Mammary epithelial cell (primary cell): ENCODE measurements at regions of chr15 and their contacts with region 1.

Region 1: DNA sequence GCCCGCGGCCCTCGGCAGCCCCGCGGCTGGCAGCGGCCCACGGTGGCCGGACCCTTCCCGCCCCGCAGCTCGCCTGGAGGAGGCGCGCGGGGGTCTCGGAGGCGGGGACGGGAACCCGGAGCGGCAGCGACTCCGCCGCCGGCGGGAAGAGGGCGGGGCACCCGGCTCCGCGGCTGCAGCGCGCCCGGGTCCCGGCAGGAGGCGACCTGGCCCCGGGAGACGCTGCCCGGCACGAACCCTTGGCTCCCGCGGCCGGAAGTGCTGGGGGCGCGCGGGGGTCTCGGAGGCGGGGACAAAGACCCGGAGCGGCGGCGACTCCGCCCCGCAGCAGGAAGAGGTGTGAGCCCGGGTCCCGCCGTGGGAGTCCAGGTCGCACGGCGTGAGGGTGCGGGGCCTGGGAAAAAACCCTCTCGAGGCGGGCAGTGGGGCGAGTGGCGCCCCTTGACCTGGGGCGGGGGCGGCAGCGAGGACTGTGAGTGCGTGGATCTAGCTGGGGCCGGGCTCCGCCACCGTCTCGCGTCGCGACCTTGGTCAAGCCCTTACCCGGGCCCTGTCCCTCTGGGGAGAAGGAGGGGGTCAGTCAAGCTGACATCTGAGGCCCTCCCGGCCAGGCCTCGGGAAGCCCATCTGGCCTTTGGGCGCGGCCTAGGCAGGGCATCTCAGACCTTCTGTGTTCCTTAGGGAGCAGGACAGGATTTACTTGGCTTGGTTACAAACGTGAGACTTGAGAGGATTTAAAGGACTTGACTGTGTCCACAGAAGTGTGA is at the start of gene CIB2:
- DNase-seq: no peak
- H3K4me3 ChIP-seq: peak within 1 kb of the TSS; percentile 39 to 63 (median 56)
- H3K27ac ChIP-seq: peak within 1 kb of the TSS; percentile 24
- H3K4me1 ChIP-seq: peaks cover 21% of the 10 kb centered on the region
- H3K27me3 ChIP-seq: no peaks in the 10 kb centered on the region
- CTCF ChIP-seq: peak; percentile 51 to 58
- total RNA-seq, gene CIB2: 5.4 to 6.5 TPM

Region 2: DNA sequence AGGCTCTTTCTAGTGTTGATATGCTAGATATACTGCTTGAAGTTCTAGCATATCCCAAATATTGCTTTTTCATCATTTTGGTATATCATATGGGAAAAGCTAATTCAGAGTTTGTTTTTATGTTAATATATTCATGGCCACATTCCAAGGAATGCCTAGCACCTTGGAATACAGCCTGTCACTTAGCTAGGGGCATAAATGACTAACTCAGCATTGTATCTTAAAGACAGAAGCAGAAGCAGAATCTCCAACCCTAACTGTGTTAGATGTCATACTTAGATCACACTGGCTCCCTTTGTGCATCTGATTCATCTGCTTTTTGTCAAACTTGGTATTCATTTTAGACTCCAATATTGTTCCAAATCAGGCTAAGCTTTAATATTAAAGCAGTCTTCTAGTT is 929.8 kb before region 1 on chr15:
- CTCF ChIA-PET with region 1: no interaction called
- dilution Hi-C with region 1: no loop called
- in situ Hi-C with region 1: no loop called
- intact Hi-C with region 1: no loop called
- DNase-seq: no peak
- H3K4me3 ChIP-seq: no peak overlapping the region
- H3K27ac ChIP-seq: no peak overlapping the region
- H3K4me1 ChIP-seq: no peaks in the 10 kb centered on the region
- H3K27me3 ChIP-seq: no peaks in the 10 kb centered on the region
- CTCF ChIP-seq: no peak

Region 3: DNA sequence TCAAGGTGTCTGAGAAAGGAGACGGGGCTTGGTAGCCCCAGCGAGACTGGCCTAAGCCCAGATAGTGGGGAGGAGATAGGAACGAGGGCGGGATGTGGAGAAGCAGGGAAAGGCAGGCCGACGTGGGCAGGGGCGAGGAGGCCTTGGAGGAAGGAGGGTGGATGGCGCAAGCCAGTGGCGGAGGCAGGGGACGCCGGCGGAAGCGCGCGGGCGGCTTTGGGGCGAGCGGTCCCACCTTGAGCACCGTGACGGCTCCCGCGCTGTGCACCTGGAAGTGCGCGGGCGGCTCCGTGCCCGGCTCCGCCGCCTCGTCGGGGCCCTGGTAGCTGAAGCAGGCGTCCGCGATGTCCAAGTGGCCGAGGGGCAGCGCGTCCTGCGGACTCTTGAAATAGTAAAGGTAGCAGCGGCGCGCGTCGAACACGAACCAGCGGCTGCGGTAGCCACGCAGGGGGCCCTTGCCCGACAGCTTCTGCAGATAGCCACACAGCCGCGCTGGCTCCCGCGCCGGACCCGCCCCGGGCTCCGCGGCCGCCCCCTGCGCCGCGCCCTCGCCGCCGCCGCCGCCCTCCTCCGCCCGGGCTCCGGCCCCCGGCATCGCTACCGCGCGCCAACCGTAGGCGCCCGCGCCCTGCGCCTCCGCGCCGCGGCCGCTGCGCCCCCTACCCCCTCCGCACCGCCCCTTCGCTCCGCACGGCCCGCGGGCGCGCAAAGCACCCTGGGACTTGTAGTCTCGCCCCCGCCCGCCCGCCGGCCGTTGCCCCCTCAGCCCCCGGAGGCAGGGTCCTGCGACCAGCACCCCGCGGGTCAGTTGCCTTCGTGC is 54.2 kb before region 1 on chr15 and contains the start of gene TBC1D2B:
- CTCF ChIA-PET with region 1: no interaction called
- dilution Hi-C with region 1: no loop called
- in situ Hi-C with region 1: no loop called
- intact Hi-C with region 1: no loop called
- DNase-seq: peak; percentile 55
- H3K4me3 ChIP-seq: peak within 1 kb of the TSS; percentile 62 to 82 (median 78)
- H3K27ac ChIP-seq: no peak within 1 kb of the TSS
- H3K4me1 ChIP-seq: peaks cover 11% of the 10 kb centered on the region
- H3K27me3 ChIP-seq: no peaks in the 10 kb centered on the region
- CTCF ChIP-seq: no peak
- total RNA-seq, gene TBC1D2B: 15.7 to 24.0 TPM

Region 4: GRCh38 chr15:78149068-78149804 is 17.8 kb after region 1 on chr15 and contains the start of gene IDH3A:
- CTCF ChIA-PET with region 1: interaction called, 7 read pairs
- dilution Hi-C with region 1: no loop called
- in situ Hi-C with region 1: no loop called
- intact Hi-C with region 1: loop called (anchors 1 kb)
- DNase-seq: peak; percentile 95
- H3K4me3 ChIP-seq: peak within 1 kb of the TSS; percentile 74 to 76 (median 76)
- H3K27ac ChIP-seq: peak within 1 kb of the TSS; percentile 52
- H3K4me1 ChIP-seq: peaks cover 22% of the 10 kb centered on the region
- H3K27me3 ChIP-seq: no peaks in the 10 kb centered on the region
- CTCF ChIP-seq: no peak
- total RNA-seq, gene IDH3A: 47.8 to 101 TPM

Region 5: DNA sequence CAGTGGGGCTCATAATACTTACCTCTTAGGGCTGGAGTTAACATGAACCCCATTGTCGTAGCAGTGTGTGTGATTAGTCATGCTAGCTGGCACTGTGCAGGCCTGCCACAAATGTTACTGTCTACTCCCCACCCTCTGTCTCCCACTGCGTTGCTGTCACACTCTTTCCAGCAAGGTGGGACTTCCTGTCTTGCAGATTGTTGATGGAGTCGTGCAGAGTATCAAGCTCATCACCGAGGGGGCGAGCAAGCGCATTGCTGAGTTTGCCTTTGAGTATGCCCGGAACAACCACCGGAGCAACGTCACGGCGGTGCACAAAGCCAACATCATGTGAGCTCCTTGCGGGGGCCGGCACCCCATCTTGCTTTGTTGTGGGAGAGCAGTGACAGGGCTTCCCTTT is 30.6 kb after region 1 on chr15:
- CTCF ChIA-PET with region 1: no interaction called
- dilution Hi-C with region 1: loop called (anchors 5 kb)
- in situ Hi-C with region 1: no loop called
- intact Hi-C with region 1: no loop called
- DNase-seq: no peak
- H3K4me3 ChIP-seq: no peak overlapping the region
- H3K27ac ChIP-seq: no peak overlapping the region
- H3K4me1 ChIP-seq: peaks cover 1% of the 10 kb centered on the region
- H3K27me3 ChIP-seq: no peaks in the 10 kb centered on the region
- CTCF ChIP-seq: no peak

Region 6: DNA sequence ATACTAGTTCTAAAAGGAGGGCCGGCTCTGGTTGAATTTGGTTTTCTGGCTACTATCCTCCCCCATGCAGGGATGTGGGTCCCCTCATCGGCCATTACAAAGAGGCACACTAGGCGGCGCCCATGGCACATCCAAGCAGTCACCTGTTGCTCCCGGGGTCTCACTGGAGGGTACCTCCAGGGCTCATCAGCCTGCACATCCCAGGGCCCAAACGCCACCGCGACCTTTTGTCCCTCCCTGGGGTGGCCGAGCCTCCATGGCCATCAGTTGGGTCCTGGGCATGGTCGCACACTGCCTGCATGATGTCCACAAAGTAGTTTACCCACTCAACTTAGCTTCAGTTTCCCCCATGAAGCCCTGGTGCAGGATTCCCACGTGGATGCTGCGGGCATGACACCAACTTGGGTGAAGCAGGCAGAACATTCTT is 46.0 kb after region 1 on chr15:
- CTCF ChIA-PET with region 1: no interaction called
- dilution Hi-C with region 1: no loop called
- in situ Hi-C with region 1: no loop called
- intact Hi-C with region 1: loop called (anchors 5 kb)
- DNase-seq: no peak
- H3K4me3 ChIP-seq: no peak overlapping the region
- H3K27ac ChIP-seq: no peak overlapping the region
- H3K4me1 ChIP-seq: peaks cover under 1% of the 10 kb centered on the region
- H3K27me3 ChIP-seq: no peaks in the 10 kb centered on the region
- CTCF ChIP-seq: peak; percentile 45 to 72

Region 7: GRCh38 chr15:78195735-78196201 is 64.3 kb after region 1 on chr15:
- CTCF ChIA-PET with region 1: interaction called, 14 read pairs
- dilution Hi-C with region 1: loop called (anchors 5 kb)
- in situ Hi-C with region 1: no loop called
- intact Hi-C with region 1: loop called (anchors 1 kb)
- DNase-seq: peak; percentile 31
- H3K4me3 ChIP-seq: no peak overlapping the region
- H3K27ac ChIP-seq: no peak overlapping the region
- H3K4me1 ChIP-seq: no peaks in the 10 kb centered on the region
- H3K27me3 ChIP-seq: no peaks in the 10 kb centered on the region
- CTCF ChIP-seq: peak; percentile 72 to 85

Region 8: DNA sequence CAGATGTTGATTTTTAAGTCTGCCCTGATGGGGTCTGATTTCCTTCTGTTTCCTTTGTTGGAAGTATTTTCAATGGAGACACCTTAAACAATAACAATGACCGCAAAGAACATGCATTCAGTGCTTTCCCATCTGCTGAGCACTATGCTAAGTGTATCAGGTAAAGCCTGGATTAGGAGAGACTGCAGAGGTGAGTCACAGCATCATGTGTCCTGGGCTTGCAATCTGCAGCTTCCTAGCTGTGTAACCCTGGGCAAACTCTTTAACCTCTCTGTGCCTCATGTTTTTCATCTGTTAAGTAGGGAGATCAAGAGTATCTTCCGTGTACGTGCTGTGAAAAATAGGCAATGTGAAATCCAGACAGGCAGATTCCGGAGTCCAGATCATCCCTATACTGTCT is 522.8 kb after region 1 on chr15:
- CTCF ChIA-PET with region 1: no interaction called
- dilution Hi-C with region 1: no loop called
- in situ Hi-C with region 1: no loop called
- intact Hi-C with region 1: no loop called
- DNase-seq: peak; percentile 39
- H3K4me3 ChIP-seq: no peak overlapping the region
- H3K27ac ChIP-seq: no peak overlapping the region
- H3K4me1 ChIP-seq: no peaks in the 10 kb centered on the region
- H3K27me3 ChIP-seq: no peaks in the 10 kb centered on the region
- CTCF ChIP-seq: no peak